HepG2 (cell line): ENCODE measurements at regions of chr4 and their contacts with region 1.

Region 1: GRCh38 chr4:125314676-125315575 is at the start of gene FAT4:
- DNase-seq: peak; percentile 88
- ATAC-seq: peak; percentile 95
- H3K4me3 ChIP-seq: peak within 1 kb of the TSS; percentile 70 to 77 (median 76)
- H3K27ac ChIP-seq: peak within 1 kb of the TSS; percentile 83
- H3K4me1 ChIP-seq: peaks cover 20% of the 10 kb centered on the region
- H3K27me3 ChIP-seq: peaks cover 0 to 6% of the 10 kb centered on the region in 2 experiments; a peak in 1 of 5 replicates
- CTCF ChIP-seq: peak; percentile 52
- EP300 ChIP-seq: peak in 1 of 2 experiments; percentile 40; a peak in 1 of 4 replicates
- POLR2A ChIP-seq: 0 out of 4 replicates have a peak, but pooled peaks of 1 of the 2 experiments have one; percentile 28
- RAD21 ChIP-seq: no peak
- total RNA-seq, gene FAT4: 0.27 TPM in 2 replicates

Region 2: DNA sequence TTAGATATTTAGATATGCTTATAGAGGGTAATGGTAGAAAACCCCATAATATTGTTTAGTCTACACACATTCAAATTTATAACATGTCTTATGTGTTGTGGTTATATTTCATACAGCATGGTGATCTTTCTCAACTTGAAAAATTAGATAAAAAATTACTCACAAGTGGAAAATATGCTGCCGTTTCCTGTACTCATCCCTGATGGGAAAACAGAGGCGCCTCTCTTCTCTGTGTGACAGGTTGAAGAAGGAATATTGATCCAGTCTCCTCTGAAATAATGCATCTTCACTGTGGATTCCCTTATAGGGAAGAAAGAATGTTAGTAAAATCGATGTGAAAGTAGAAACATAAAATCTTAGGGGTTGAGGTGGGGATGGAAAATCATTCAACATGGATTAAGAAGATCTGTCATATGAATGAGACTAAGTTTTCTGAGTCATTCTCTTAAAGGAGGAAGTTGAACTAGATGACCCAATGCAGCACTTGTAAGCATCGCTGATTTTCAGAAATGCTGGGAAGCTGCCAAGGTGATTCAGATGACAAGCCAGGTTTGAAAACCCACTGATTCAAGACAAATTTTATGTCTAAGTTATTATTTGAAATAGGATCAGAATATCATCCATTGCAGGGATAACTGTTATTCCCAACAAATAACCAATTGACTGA is 673.1 kb before region 1 on chr4:
- CTCF ChIA-PET with region 1: no interaction called
- POLR2A ChIA-PET with region 1: no interaction called
- in situ Hi-C with region 1: no loop called
- intact Hi-C with region 1: no loop called
- DNase-seq: no peak
- ATAC-seq: no peak
- H3K4me3 ChIP-seq: no peak overlapping the region
- H3K27ac ChIP-seq: no peak overlapping the region
- H3K4me1 ChIP-seq: no peaks in the 10 kb centered on the region
- H3K27me3 ChIP-seq: no peaks in the 10 kb centered on the region; a peak in 1 of 5 replicates
- CTCF ChIP-seq: no peak
- EP300 ChIP-seq: no peak
- POLR2A ChIP-seq: no peak
- RAD21 ChIP-seq: no peak

Region 3: DNA sequence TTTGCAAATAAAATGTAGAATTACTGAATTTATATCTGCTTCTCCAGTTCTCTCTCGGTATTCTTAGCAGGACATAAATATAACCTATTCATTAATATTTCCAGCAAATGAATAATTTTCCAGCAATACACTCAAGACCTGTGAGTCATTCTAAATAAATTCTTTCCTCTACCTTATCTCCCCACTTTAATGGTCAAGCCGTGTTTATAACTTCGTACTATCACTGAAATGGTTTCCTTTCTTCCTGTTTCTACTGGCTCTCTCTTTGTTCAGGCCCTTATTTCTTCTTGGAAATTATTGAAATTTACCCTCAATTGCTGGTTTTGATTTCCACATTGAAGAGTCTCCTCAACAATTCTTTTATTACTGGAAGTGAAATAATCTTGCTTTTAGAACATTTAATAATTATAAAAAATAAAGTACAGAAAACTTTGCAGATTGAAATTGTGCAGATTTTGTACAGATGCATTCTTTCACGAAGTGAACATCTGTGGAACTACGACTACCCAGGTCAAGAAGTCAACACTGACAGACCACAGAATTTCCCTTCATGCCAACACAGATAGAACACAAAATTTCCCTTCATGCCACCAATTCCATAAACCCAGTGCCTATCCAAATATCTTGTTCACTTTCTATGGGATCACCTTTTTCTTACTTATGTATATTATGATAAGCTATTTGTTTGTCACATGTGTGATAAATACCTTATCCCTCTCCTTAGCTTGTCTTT is 205.5 kb after region 1 on chr4:
- CTCF ChIA-PET with region 1: no interaction called
- POLR2A ChIA-PET with region 1: no interaction called
- in situ Hi-C with region 1: no loop called
- intact Hi-C with region 1: loop called (anchors 10 kb)
- DNase-seq: no peak
- ATAC-seq: no peak
- H3K4me3 ChIP-seq: no peak overlapping the region
- H3K27ac ChIP-seq: no peak overlapping the region
- H3K4me1 ChIP-seq: no peaks in the 10 kb centered on the region
- H3K27me3 ChIP-seq: no peaks in the 10 kb centered on the region
- CTCF ChIP-seq: no peak
- EP300 ChIP-seq: no peak
- POLR2A ChIP-seq: no peak
- RAD21 ChIP-seq: no peak

Region 4: GRCh38 chr4:125741825-125742452 is 427.0 kb after region 1 on chr4:
- CTCF ChIA-PET with region 1: interaction called, 13 read pairs
- POLR2A ChIA-PET with region 1: no interaction called
- in situ Hi-C with region 1: no loop called
- intact Hi-C with region 1: loop called (anchors 1 kb)
- DNase-seq: peak; percentile 1
- ATAC-seq: no peak
- H3K4me3 ChIP-seq: no peak overlapping the region
- H3K27ac ChIP-seq: no peak overlapping the region
- H3K4me1 ChIP-seq: no peaks in the 10 kb centered on the region
- H3K27me3 ChIP-seq: no peaks in the 10 kb centered on the region
- CTCF ChIP-seq: peak; percentile 28
- EP300 ChIP-seq: no peak
- POLR2A ChIP-seq: no peak
- RAD21 ChIP-seq: no peak

Region 5: GRCh38 chr4:125979950-125980349 is 665.0 kb after region 1 on chr4:
- CTCF ChIA-PET with region 1: no interaction called
- POLR2A ChIA-PET with region 1: no interaction called
- in situ Hi-C with region 1: loop called (anchors 10 kb)
- intact Hi-C with region 1: no loop called
- DNase-seq: no peak
- ATAC-seq: no peak
- H3K4me3 ChIP-seq: no peak overlapping the region
- H3K27ac ChIP-seq: no peak overlapping the region
- H3K4me1 ChIP-seq: no peaks in the 10 kb centered on the region
- H3K27me3 ChIP-seq: no peaks in the 10 kb centered on the region
- CTCF ChIP-seq: no peak
- EP300 ChIP-seq: no peak
- POLR2A ChIP-seq: no peak
- RAD21 ChIP-seq: no peak

Region 6: GRCh38 chr4:126405369-126405982 is 1090.5 kb after region 1 on chr4:
- CTCF ChIA-PET with region 1: interaction called, 10 read pairs
- POLR2A ChIA-PET with region 1: no interaction called
- in situ Hi-C with region 1: loop called (anchors 10 kb)
- intact Hi-C with region 1: no loop called
- DNase-seq: peak; percentile 6
- ATAC-seq: peak; percentile 64
- H3K4me3 ChIP-seq: no peak overlapping the region
- H3K27ac ChIP-seq: no peak overlapping the region
- H3K4me1 ChIP-seq: no peaks in the 10 kb centered on the region
- H3K27me3 ChIP-seq: no peaks in the 10 kb centered on the region
- CTCF ChIP-seq: peak; percentile 23; the same call in 1 of the 2 replicates
- EP300 ChIP-seq: no peak
- POLR2A ChIP-seq: no peak
- RAD21 ChIP-seq: no peak